ENCODE measurements at regions of chr9 and their contacts with region 1.

Region 1: DNA sequence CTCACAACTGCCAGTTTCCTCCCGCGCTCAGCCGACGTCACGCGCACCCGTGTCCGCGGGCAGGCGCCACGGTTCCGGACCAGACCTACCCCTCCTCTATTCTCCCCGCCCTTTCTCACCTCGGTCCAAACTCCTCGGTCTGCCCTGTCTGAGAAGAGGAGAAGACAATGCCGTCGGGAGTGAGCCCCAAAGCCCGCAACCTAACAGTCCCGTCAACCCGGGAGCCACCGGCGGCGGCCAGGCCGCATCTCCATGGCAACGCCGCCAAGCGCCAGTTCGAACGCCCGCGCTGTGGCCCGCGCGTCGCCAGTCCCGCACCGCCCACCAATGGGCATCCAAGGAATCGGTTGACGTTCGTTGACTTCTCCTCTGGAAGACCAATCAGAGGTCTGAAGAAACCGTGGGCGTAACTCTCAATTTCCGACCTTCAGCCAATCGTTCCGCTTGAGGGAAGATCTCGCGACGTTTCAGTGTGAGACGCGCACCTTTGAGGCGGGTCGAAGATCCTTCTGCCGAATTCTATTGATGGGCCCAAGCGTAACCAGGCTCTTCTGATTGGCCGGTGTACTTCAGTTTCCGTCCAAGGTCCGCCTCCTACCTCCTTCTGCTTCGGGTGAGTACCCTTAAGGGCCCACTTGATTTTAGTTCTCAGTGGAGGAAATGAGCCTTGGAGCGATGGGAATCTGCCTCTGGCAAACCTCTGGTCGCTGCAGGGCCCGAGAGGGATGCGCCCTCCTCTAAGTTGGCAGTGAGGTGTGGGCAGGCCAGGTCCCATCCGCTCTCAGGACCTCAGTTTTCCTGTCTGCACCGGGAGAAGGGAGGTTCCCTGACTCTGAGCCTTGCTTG is at the starts of genes KIF24 and NUDT2:
- DNase-seq: peak; percentile 88 to 100 (median 92)
- ATAC-seq: peak; percentile 92
- H3K4me3 ChIP-seq: peak within 1 kb of the TSS; percentile 93
- H3K4me3 Mint-ChIP-seq: peak within 1 kb of the TSS; percentile 90
- H3K27ac ChIP-seq: peak within 1 kb of the TSS; percentile 76 to 86
- H3K27ac Mint-ChIP-seq: peak within 1 kb of the TSS; percentile 90
- H3K4me1 ChIP-seq: peaks cover 21% of the 10 kb centered on the region
- H3K4me1 Mint-ChIP-seq: peaks cover 42% of the 10 kb centered on the region
- H3K27me3 ChIP-seq: no peaks in the 10 kb centered on the region
- H3K27me3 Mint-ChIP-seq: no peaks in the 10 kb centered on the region
- CTCF ChIP-seq: no peak
- total RNA-seq, gene KIF24: 0.05 to 0.14 TPM
- total RNA-seq, gene NUDT2: 4.5 to 7.2 TPM

Region 2: GRCh38 chr9:33903157-33903780 is 425.9 kb before region 1 on chr9:
- CTCF ChIA-PET with region 1: no interaction called
- POLR2A ChIA-PET with region 1: no interaction called
- intact Hi-C with region 1: no loop called
- DNase-seq: no peak
- ATAC-seq: no peak
- H3K4me3 ChIP-seq: no peak overlapping the region
- H3K4me3 Mint-ChIP-seq: no peak overlapping the region
- H3K27ac ChIP-seq: no peak overlapping the region
- H3K27ac Mint-ChIP-seq: no peak overlapping the region
- H3K4me1 ChIP-seq: no peaks in the 10 kb centered on the region
- H3K4me1 Mint-ChIP-seq: peaks cover 25% of the 10 kb centered on the region
- H3K27me3 ChIP-seq: no peaks in the 10 kb centered on the region
- H3K27me3 Mint-ChIP-seq: no peaks in the 10 kb centered on the region
- CTCF ChIP-seq: no peak

Region 3: GRCh38 chr9:34048923-34049697 is 280.1 kb before region 1 on chr9:
- CTCF ChIA-PET with region 1: interaction called, 3 read pairs
- POLR2A ChIA-PET with region 1: no interaction called
- intact Hi-C with region 1: loop called (anchors 2 kb)
- DNase-seq: peak; percentile 92 to 98 (median 96)
- ATAC-seq: peak; percentile 82
- H3K4me3 ChIP-seq: peak overlapping the region; percentile 98
- H3K4me3 Mint-ChIP-seq: peak overlapping the region; percentile 92
- H3K27ac ChIP-seq: peak overlapping the region; percentile 83 to 93
- H3K27ac Mint-ChIP-seq: peak overlapping the region; percentile 97
- H3K4me1 ChIP-seq: peaks cover 26% of the 10 kb centered on the region
- H3K4me1 Mint-ChIP-seq: peaks cover 34% of the 10 kb centered on the region
- H3K27me3 ChIP-seq: no peaks in the 10 kb centered on the region
- H3K27me3 Mint-ChIP-seq: no peaks in the 10 kb centered on the region
- CTCF ChIP-seq: no peak

Region 4: DNA sequence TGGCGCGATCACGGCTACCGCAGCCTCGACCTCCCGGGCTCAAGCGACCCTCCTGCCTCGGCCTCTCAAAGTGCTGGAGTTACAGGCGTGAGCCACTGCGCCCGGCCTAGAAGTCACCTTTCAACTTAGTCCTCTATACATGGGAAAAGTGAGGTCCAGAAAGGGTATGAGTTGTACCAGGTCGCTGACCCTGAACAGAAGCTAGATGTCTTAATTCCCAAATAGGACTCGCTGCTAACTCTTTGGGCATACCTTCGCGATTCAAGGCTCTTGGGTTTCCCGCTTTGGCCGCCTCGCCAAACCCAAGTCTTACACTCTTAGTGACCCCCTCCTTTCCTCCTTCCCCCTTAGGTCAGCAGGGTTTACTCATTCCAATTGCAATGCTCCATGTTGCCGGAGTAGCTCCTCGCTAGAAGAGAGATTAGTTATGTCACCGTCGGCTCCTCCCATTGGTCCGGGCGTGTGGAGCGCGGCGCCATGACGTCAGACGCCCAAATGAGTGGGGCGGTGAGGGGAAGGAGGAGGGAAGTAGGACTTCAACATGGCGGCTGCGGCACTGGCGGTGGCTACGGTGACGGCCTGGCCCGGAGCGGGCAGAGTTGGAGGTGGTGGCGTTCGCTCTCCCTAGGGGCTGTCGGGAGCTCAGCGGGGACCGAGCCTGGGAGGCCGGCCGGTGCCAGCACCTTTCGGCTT is 150.5 kb before region 1 on chr9 and contains the start of gene UBAP1:
- CTCF ChIA-PET with region 1: no interaction called
- POLR2A ChIA-PET with region 1: no interaction called
- intact Hi-C with region 1: loop called in 1 of 2 experiments (anchors 2 kb)
- DNase-seq: peak; percentile 88 to 98 (median 94)
- ATAC-seq: peak; percentile 97
- H3K4me3 ChIP-seq: peak within 1 kb of the TSS; percentile 71
- H3K4me3 Mint-ChIP-seq: peak within 1 kb of the TSS; percentile 94
- H3K27ac ChIP-seq: peak within 1 kb of the TSS; percentile 87 to 90
- H3K27ac Mint-ChIP-seq: peak within 1 kb of the TSS; percentile 90
- H3K4me1 ChIP-seq: peaks cover 32% of the 10 kb centered on the region
- H3K4me1 Mint-ChIP-seq: peaks cover 15% of the 10 kb centered on the region
- H3K27me3 ChIP-seq: no peaks in the 10 kb centered on the region
- H3K27me3 Mint-ChIP-seq: no peaks in the 10 kb centered on the region
- CTCF ChIP-seq: no peak
- total RNA-seq, gene UBAP1: 47.1 to 50.4 TPM

Region 5: DNA sequence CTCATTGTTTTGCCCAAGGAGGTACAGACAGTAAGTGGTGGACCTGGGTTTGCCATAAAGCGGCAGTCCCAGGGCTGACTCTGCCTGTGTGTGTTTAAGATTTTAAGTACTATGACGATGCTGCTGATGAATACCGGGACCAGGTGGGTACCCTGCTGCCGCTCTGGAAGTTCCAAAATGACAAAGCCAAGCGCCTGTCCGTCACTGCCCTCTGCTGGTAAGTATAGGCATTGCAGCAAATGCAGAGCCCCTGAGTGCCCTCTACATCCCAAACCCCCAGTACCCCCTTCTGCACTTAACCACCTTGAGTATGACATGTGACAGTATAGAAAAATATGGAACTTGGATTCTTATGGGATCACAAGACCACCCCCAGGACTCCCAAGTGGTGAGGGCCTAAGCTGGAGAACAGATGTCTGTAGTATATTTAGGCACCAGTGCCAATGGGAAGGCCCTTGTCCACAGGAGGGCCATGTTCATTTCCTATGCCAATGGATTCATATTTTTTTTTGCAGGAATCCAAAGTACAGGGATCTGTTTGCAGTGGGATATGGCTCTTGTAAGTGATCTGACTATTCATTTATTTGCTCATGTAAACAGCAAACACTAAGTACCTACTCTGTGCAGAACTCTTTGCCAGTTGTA is 171.5 kb after region 1 on chr9:
- CTCF ChIA-PET with region 1: interaction called, 4 read pairs
- POLR2A ChIA-PET with region 1: no interaction called
- intact Hi-C with region 1: loop called (anchors 1 kb)
- DNase-seq: peak; percentile 47 to 81 (median 66)
- ATAC-seq: peak; percentile 94
- H3K4me3 ChIP-seq: no peak overlapping the region
- H3K4me3 Mint-ChIP-seq: no peak overlapping the region
- H3K27ac ChIP-seq: no peak overlapping the region
- H3K27ac Mint-ChIP-seq: no peak overlapping the region
- H3K4me1 ChIP-seq: peaks cover 3% of the 10 kb centered on the region
- H3K4me1 Mint-ChIP-seq: no peaks in the 10 kb centered on the region
- H3K27me3 ChIP-seq: no peaks in the 10 kb centered on the region
- H3K27me3 Mint-ChIP-seq: peaks cover 10% of the 10 kb centered on the region
- CTCF ChIP-seq: peak; percentile 97

Region 6: DNA sequence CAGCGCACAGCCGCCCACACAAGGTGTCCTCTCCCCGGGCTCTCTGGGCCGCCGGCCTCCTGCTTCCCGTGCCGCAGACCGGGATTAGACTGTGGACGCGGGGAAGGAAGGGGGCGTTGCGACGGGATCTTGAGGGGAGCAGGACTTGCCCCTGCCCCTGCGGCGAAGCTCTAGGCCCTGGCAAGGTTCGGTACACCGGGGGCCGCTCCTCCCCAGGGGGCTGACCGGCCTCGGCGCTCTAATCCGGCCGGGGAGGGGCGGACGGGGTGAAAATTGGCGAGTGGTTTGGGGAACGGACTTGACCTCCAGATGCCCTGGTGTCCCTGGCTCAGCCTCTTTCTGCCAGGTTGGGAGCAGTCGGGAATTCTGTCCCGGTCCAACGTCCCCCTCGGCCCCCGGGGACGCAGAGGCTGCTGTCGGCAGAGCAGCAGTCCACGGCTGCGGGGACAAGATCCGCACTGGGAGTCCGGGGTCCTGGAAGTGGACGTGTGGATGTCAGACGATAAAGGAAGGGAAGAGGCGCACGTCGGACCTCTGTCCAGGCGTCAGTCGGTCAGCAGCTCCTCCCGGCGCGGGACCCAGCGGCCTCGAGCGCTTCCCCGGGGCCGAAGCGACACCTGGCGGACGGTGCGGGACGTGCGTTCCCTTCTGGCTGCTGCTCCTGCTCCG is 262.2 kb after region 1 on chr9:
- CTCF ChIA-PET with region 1: no interaction called
- POLR2A ChIA-PET with region 1: no interaction called
- intact Hi-C with region 1: loop called (anchors 5 kb)
- DNase-seq: peak; percentile 51 to 87 (median 72)
- ATAC-seq: peak; percentile 76
- H3K4me3 ChIP-seq: peak overlapping the region; percentile 63
- H3K4me3 Mint-ChIP-seq: peak overlapping the region; percentile 80
- H3K27ac ChIP-seq: no peak overlapping the region
- H3K27ac Mint-ChIP-seq: no peak overlapping the region
- H3K4me1 ChIP-seq: peaks cover 30% of the 10 kb centered on the region
- H3K4me1 Mint-ChIP-seq: peaks cover 26% of the 10 kb centered on the region
- H3K27me3 ChIP-seq: peaks cover 69 to 75% of the 10 kb centered on the region in 2 experiments
- H3K27me3 Mint-ChIP-seq: peaks cover 83% of the 10 kb centered on the region
- CTCF ChIP-seq: peak; percentile 89

Measured in CD4-positive, alpha-beta T cell (primary cell).